ENCODE measurements at regions of chr2 and their contacts with region 1.

Region 1: GRCh38 chr2:149928011-149928410 is 340.4 kb upstream of the MMADHC start:
- DNase-seq: no peak
- ATAC-seq: no peak
- H3K4me3 ChIP-seq: no peak overlapping the region
- H3K27ac ChIP-seq: no peak overlapping the region
- H3K4me1 ChIP-seq: no peaks in the 10 kb centered on the region
- H3K27me3 ChIP-seq: no peaks in the 10 kb centered on the region
- CTCF ChIP-seq: no peak
- EP300 ChIP-seq: no peak
- POLR2A ChIP-seq: no peak
- RAD21 ChIP-seq: no peak

Region 2: DNA sequence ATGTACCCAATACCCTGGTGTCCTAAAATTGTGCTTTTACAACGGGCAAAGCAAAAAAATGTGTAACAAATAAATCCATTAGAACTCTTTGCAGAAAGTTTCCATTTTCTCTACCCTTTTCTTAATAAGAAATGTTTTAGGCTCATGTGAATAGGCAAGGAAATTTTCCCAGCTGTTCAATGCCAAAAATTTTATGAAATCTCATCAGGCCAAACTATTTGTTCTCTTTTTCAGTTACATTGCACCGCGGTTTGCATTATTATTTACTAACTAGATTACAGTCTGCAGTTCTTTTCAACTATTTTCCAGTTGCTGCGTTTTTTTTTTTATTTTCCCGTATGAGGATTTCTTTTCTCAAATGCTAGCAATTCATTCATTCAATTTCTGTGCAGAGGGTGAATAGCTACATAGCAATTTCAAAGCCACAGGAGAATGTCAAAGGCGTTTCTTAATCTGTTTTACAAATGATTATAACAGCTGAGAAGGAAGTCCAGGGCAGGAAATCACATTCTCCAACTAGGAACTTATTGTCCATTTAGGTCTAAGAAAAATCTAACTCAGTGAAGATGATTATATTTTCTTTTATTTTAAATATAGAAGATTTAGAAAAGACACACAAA is 27.1 kb after region 1 on chr2:
- CTCF ChIA-PET with region 1: no interaction called
- POLR2A ChIA-PET with region 1: no interaction called
- in situ Hi-C with region 1: no loop called
- intact Hi-C with region 1: loop called (anchors 1 kb)
- DNase-seq: no peak
- ATAC-seq: no peak
- H3K4me3 ChIP-seq: no peak overlapping the region
- H3K27ac ChIP-seq: no peak overlapping the region
- H3K4me1 ChIP-seq: peaks cover 7% of the 10 kb centered on the region
- H3K27me3 ChIP-seq: no peaks in the 10 kb centered on the region
- CTCF ChIP-seq: no peak
- EP300 ChIP-seq: no peak
- POLR2A ChIP-seq: no peak
- RAD21 ChIP-seq: no peak

Measured in HepG2 (cell line).